ENCODE measurements at regions of chr1 and their contacts with region 1.

Region 1: DNA sequence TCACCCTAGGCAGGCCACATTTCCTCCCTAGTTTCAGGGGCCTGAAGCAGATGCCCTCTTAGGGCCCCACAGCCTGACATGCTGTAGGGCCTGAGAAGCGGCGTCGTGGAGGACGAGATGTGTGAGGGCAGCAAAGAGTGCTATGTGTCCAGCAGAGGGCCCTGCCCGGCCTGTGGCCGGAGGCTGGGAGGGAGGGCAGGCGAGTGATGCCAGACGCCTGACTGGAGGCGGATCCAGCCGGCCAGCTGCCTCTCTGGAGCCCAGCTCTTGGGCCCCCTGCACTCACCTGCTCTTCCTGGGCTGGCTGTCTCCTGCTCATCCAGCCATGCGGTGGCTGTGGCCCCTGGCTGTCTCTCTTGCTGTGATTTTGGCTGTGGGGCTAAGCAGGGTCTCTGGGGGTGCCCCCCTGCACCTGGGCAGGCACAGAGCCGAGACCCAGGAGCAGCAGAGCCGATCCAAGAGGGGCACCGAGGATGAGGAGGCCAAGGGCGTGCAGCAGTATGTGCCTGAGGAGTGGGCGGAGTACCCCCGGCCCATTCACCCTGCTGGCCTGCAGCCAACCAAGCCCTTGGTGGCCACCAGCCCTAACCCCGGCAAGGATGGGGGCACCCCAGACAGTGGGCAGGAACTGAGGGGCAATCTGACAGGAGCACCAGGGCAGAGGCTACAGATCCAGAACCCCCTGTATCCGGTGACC is at the start of gene GPR37L1:
- DNase-seq: peak; percentile 62 to 72 (median 66)
- ATAC-seq: peak; percentile 80
- H3K4me3 ChIP-seq: no peak within 1 kb of the TSS
- H3K27ac ChIP-seq: no peak within 1 kb of the TSS
- H3K4me1 ChIP-seq: peaks cover 9 to 17% of the 10 kb centered on the region in 2 experiments; a peak in 4 of 5 replicates
- H3K27me3 ChIP-seq: peaks cover 38 to 67% of the 10 kb centered on the region in 2 experiments
- CTCF ChIP-seq: peak; percentile 67 to 76 (median 70)
- EP300 ChIP-seq: no peak
- POLR2A ChIP-seq: no peak
- RAD21 ChIP-seq: peak; percentile 21 to 63; a peak in 3 of 4 replicates
- polyA plus RNA-seq, gene GPR37L1: not detected

Region 2: DNA sequence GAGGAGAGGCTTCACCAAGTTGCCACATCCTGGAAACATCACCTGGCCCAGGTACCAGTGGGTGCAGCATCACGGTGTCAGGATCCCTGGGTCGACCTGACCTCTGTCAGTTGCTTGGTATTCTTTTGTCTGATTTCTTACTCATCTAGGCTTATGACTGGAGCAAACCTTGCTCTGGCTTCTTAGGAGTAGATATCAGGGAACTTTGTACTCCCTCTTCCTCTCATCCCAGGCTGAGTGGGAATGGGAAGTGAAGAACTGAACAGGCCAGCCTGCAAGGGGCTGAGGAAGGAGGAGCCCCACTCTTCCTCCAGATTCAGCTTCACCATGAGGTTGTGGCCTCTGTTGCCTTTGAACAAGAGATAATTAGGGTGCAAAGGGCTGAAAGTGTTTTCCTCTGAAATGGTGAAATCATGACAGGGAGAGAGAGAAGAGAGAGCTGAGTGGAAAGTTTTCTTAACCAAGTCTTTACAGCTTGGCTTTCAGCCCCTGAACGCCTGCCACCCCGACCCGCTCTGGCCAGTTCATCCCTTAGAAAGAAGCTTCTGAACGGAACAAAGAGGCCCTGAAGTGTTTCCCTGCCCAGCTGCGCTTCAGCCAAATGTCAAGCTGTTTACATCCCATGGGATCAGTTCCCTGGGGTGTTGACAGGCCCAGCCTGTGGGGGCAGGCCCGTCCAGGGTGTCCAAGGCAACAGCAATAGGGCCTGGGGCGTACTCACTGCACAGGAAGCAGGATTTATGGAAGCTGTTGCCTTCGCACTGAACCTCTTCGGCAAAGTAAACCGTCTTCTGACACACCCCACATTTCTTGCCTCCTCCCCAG is 627.1 kb before region 1 on chr1:
- CTCF ChIA-PET with region 1: no interaction called
- POLR2A ChIA-PET with region 1: no interaction called
- in situ Hi-C with region 1: no loop called
- intact Hi-C with region 1: no loop called
- DNase-seq: no peak
- ATAC-seq: no peak
- H3K4me3 ChIP-seq: no peak overlapping the region
- H3K27ac ChIP-seq: no peak overlapping the region
- H3K4me1 ChIP-seq: no peaks in the 10 kb centered on the region; a peak in 1 of 5 replicates
- H3K27me3 ChIP-seq: peaks cover 0 to 15% of the 10 kb centered on the region in 2 experiments; a peak in 1 of 5 replicates
- CTCF ChIP-seq: no peak
- EP300 ChIP-seq: no peak
- POLR2A ChIP-seq: no peak
- RAD21 ChIP-seq: no peak

Region 3: GRCh38 chr1:201602413-201603265 is 520.1 kb before region 1 on chr1:
- CTCF ChIA-PET with region 1: no interaction called
- POLR2A ChIA-PET with region 1: no interaction called
- in situ Hi-C with region 1: no loop called
- intact Hi-C with region 1: no loop called
- DNase-seq: peak in 2 of 4 experiments; percentile 74 to 79
- ATAC-seq: peak; percentile 90
- H3K4me3 ChIP-seq: no peak overlapping the region
- H3K27ac ChIP-seq: no peak overlapping the region
- H3K4me1 ChIP-seq: peaks cover 17 to 22% of the 10 kb centered on the region in 2 experiments
- H3K27me3 ChIP-seq: no peaks in the 10 kb centered on the region; a peak in 1 of 5 replicates
- CTCF ChIP-seq: no peak
- EP300 ChIP-seq: peak; percentile 54
- POLR2A ChIP-seq: no peak
- RAD21 ChIP-seq: no peak; a peak in 1 of 4 replicates

Region 4: DNA sequence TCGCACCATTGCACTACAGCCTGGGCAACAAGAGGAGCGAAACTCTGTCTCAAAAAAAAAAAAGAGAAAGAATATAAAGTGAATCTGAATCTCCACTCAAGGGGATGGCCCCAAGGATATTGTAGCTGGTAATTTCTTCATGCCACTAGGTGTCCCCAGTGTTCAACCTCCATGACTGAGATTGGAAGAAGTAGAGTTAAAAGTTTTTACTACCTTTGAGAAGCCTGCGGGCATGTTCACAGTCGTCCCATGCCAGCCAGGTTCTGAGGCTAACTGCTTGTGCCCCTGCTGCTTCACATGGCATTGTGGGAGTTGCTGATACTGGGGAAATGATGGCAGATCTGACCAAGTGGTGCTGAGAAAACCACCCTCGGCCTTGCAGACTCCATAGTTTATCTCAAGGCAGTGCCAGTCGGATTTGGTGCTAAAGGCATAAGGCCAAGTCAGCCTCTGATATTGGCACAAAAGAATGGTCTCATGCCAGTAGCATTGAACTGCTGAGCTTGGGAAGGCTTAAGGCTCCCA is 244.8 kb before region 1 on chr1:
- CTCF ChIA-PET with region 1: interaction called, 6 read pairs
- POLR2A ChIA-PET with region 1: interaction called, 4 read pairs
- in situ Hi-C with region 1: no loop called
- intact Hi-C with region 1: loop called (anchors 5 kb)
- DNase-seq: peak; percentile 55 to 73 (median 58)
- ATAC-seq: peak; percentile 81
- H3K4me3 ChIP-seq: no peak overlapping the region
- H3K27ac ChIP-seq: no peak overlapping the region
- H3K4me1 ChIP-seq: peaks cover 0 to 9% of the 10 kb centered on the region in 2 experiments; a peak in 3 of 5 replicates
- H3K27me3 ChIP-seq: no peaks in the 10 kb centered on the region
- CTCF ChIP-seq: peak; percentile 67 to 82 (median 76)
- EP300 ChIP-seq: no peak
- POLR2A ChIP-seq: peak; percentile 62
- RAD21 ChIP-seq: peak; percentile 27 to 75; a peak in 3 of 4 replicates

Region 5: DNA sequence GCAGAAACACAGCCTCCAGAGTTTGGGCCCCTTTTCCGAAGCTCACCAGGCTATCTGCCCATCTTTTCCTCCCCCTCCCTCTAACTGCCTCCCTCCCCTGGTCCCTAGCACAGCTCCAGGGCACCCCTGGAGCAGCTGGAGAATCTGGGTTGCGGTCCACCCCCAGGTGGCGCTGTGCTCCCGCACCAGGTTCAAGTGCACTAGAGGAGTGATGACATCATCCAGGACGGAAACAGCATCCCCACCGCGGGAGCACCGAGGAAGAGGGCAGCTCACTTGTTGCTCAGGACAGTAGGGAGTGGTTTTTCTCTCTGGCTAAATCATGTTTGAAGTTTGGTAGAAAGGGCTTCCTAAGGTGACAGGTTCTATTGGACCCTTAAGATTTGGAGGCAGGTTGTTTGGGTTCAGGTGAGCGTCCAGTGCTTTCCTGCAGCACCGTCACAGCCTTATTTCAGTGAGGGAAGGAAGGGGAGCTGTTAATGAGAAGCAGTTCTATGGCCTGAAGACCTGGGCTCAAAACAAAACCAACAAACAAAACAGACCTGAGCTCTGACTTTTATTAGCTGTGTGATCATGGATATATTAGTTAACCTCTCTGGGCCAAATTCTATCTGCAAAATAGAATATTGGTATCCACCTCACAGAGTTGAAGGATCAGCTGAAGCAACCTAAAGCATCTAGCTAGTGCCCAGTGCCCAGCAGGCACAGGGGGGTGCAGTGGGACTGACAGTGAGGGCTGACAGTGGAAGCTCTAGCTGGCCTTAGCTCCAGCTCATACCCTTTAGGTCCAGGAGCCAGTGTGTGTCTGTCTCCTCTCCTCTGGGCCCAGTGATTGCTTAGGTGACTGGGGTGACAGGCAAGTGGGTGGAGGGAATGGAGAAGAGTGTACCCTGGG is 226.6 kb before region 1 on chr1:
- CTCF ChIA-PET with region 1: interaction called, 26 read pairs
- POLR2A ChIA-PET with region 1: interaction called, 7 read pairs
- in situ Hi-C with region 1: loop called (anchors 5 kb)
- intact Hi-C with region 1: loop called (anchors 1 kb)
- DNase-seq: peak; percentile 93 to 98 (median 96)
- ATAC-seq: peak; percentile 98
- H3K4me3 ChIP-seq: no peak overlapping the region
- H3K27ac ChIP-seq: no peak overlapping the region; the same call in 2 of the 3 replicates
- H3K4me1 ChIP-seq: peaks cover 3 to 8% of the 10 kb centered on the region in 2 experiments; a peak in 2 of 5 replicates
- H3K27me3 ChIP-seq: peaks cover 0 to 21% of the 10 kb centered on the region in 2 experiments; a peak in 3 of 5 replicates
- CTCF ChIP-seq: peak; percentile 98 to 99 (median 99)
- EP300 ChIP-seq: peak; percentile 53
- POLR2A ChIP-seq: no peak
- RAD21 ChIP-seq: peak; percentile 99 to 100

Region 6: GRCh38 chr1:202009326-202010179 is 113.2 kb before region 1 on chr1:
- CTCF ChIA-PET with region 1: interaction called, 66 read pairs
- POLR2A ChIA-PET with region 1: interaction called, 3 read pairs
- in situ Hi-C with region 1: loop called (anchors 5 kb)
- intact Hi-C with region 1: loop called (anchors 1 kb)
- DNase-seq: peak; percentile 84 to 90 (median 86)
- ATAC-seq: peak; percentile 89
- H3K4me3 ChIP-seq: no peak overlapping the region
- H3K27ac ChIP-seq: no peak overlapping the region
- H3K4me1 ChIP-seq: peaks cover 15 to 34% of the 10 kb centered on the region in 2 experiments; a peak in 4 of 5 replicates
- H3K27me3 ChIP-seq: peaks cover 0 to 9% of the 10 kb centered on the region in 2 experiments; a peak in 1 of 5 replicates
- CTCF ChIP-seq: peak; percentile 92 to 98 (median 96)
- EP300 ChIP-seq: no peak
- POLR2A ChIP-seq: no peak
- RAD21 ChIP-seq: peak; percentile 94 to 97

Region 7: DNA sequence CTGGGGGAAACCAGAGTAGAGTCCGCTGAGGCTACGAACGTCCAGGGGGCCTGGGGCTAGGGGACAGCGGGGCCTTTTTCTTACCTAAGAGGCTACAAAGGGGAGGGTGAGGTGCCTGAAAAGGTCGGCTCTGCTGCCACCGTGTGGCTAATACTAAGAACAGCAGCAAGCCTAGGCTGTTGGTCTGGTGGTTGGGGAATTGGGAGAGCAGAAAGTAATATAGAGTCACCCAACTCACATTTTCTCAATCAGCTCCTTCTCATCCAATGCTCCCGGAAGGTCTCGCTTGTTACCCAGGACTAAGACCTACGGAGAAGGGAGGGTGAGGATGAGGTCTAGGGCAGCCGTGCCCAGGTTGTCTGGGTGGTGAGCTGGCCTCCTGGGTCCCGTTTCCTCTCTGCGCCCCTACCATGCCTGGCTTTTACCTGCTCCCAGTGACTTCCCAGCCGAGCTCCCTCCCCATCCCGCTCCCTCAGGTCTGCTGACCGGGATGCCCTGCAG is 12.5 kb after region 1 on chr1:
- CTCF ChIA-PET with region 1: interaction called, 3 read pairs
- POLR2A ChIA-PET with region 1: interaction called, 6 read pairs
- in situ Hi-C with region 1: no loop called
- intact Hi-C with region 1: loop called (anchors 1 kb)
- DNase-seq: peak; percentile 84 to 92 (median 90)
- ATAC-seq: peak; percentile 95
- H3K4me3 ChIP-seq: no peak overlapping the region
- H3K27ac ChIP-seq: no peak overlapping the region
- H3K4me1 ChIP-seq: peaks cover 0 to 17% of the 10 kb centered on the region in 2 experiments; a peak in 2 of 5 replicates
- H3K27me3 ChIP-seq: no peaks in the 10 kb centered on the region
- CTCF ChIP-seq: peak; percentile 83 to 95 (median 86)
- EP300 ChIP-seq: no peak
- POLR2A ChIP-seq: no peak
- RAD21 ChIP-seq: peak; percentile 65 to 70

Measured in K562 (cell line).